ENCODE measurements at regions of chr5 and their contacts with region 1.

Region 1: GRCh38 chr5:41856644-41857491 is 13.4 kb downstream of the OXCT1 start:
- DNase-seq: peak in 13 of 14 experiments; percentile 6 to 87 (median 40)
- ATAC-seq: peak; percentile 92
- H3K4me3 ChIP-seq: no peak overlapping the region
- H3K4me3 Mint-ChIP-seq: no peak overlapping the region
- H3K27ac ChIP-seq: no peak overlapping the region
- H3K27ac Mint-ChIP-seq: no peak overlapping the region
- H3K4me1 ChIP-seq: peaks cover 3% of the 10 kb centered on the region
- H3K4me1 Mint-ChIP-seq: peaks cover 9% of the 10 kb centered on the region
- H3K27me3 ChIP-seq: no peaks in the 10 kb centered on the region
- H3K27me3 Mint-ChIP-seq: no peaks in the 10 kb centered on the region
- CTCF ChIP-seq: peak; percentile 83

Region 2: DNA sequence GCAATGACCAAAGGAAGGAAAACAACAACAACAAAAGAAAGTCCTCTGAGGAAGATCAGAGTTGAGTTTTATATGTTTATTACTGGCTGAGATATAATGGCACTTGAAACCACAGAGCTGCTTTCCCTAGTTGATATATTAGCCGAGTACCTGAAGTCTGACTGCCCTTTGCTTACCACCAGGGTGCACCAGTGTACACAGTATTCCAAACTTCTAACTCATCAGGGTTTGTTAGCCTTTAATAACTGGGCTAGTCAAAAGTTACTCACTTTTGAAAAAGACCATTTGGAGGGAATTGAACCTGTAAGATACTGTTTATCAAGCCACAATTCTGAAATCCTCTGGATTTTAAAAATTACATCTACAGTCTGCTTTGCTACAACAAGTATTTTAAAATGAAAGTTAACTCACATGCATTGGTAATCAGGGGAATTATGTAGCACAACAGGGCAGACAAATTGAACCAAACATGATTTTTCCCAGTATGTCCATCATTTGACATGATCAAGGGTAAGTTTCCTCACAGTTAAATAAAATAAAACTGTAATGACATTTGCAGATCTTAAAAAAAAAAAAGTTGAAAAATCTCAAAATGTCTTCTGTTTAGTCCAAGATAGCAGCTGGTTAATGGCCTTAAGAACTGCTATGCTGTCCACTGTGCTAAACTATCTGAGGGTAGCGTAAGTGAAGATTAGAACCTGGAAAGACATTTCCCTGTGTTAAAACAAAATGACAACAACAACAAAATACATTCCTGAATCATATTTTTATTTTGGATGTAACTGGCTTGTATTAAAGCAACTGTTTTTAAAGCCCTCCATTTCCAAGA is 586.2 kb before region 1 on chr5:
- CTCF ChIA-PET with region 1: no interaction called
- POLR2A ChIA-PET with region 1: no interaction called
- intact Hi-C with region 1: no loop called
- DNase-seq: peak in 3 of 14 experiments; percentile 1 to 9 (median 3)
- ATAC-seq: no peak
- H3K4me3 ChIP-seq: no peak overlapping the region
- H3K4me3 Mint-ChIP-seq: no peak overlapping the region
- H3K27ac ChIP-seq: no peak overlapping the region
- H3K27ac Mint-ChIP-seq: no peak overlapping the region
- H3K4me1 ChIP-seq: no peaks in the 10 kb centered on the region
- H3K4me1 Mint-ChIP-seq: no peaks in the 10 kb centered on the region
- H3K27me3 ChIP-seq: no peaks in the 10 kb centered on the region
- H3K27me3 Mint-ChIP-seq: no peaks in the 10 kb centered on the region
- CTCF ChIP-seq: no peak

Region 3: GRCh38 chr5:41843456-41844370 is 13.2 kb before region 1 on chr5:
- CTCF ChIA-PET with region 1: interaction called, 10 read pairs
- POLR2A ChIA-PET with region 1: interaction called, 3 read pairs
- intact Hi-C with region 1: no loop called
- DNase-seq: peak in 4 of 14 experiments; percentile 33 to 62 (median 58)
- ATAC-seq: peak; percentile 67
- H3K4me3 ChIP-seq: no peak overlapping the region
- H3K4me3 Mint-ChIP-seq: no peak overlapping the region
- H3K27ac ChIP-seq: no peak overlapping the region
- H3K27ac Mint-ChIP-seq: no peak overlapping the region
- H3K4me1 ChIP-seq: no peaks in the 10 kb centered on the region
- H3K4me1 Mint-ChIP-seq: peaks cover 9% of the 10 kb centered on the region
- H3K27me3 ChIP-seq: no peaks in the 10 kb centered on the region
- H3K27me3 Mint-ChIP-seq: no peaks in the 10 kb centered on the region
- CTCF ChIP-seq: peak; percentile 70

Region 4: GRCh38 chr5:41924872-41925554 is 68.1 kb after region 1 on chr5 and contains the start of gene FBXO4:
- CTCF ChIA-PET with region 1: interaction called, 18 read pairs
- POLR2A ChIA-PET with region 1: interaction called, 10 read pairs
- intact Hi-C with region 1: loop called (anchors 2 kb)
- DNase-seq: peak; percentile 76 to 96 (median 86)
- ATAC-seq: peak; percentile 95
- H3K4me3 ChIP-seq: peak within 1 kb of the TSS; percentile 81
- H3K4me3 Mint-ChIP-seq: peak within 1 kb of the TSS; percentile 87
- H3K27ac ChIP-seq: peak within 1 kb of the TSS; percentile 93 to 95
- H3K27ac Mint-ChIP-seq: peak within 1 kb of the TSS; percentile 93
- H3K4me1 ChIP-seq: peaks cover 20% of the 10 kb centered on the region
- H3K4me1 Mint-ChIP-seq: peaks cover 29% of the 10 kb centered on the region
- H3K27me3 ChIP-seq: no peaks in the 10 kb centered on the region
- H3K27me3 Mint-ChIP-seq: no peaks in the 10 kb centered on the region
- CTCF ChIP-seq: peak; percentile 71
- total RNA-seq, gene FBXO4: 7.0 to 8.1 TPM

Region 5: GRCh38 chr5:42057254-42057690 is 200.4 kb after region 1 on chr5:
- CTCF ChIA-PET with region 1: interaction called, 48 read pairs
- POLR2A ChIA-PET with region 1: interaction called, 17 read pairs
- intact Hi-C with region 1: loop called (anchors 1 kb)
- DNase-seq: peak; percentile 27 to 74 (median 44)
- ATAC-seq: peak; percentile 84
- H3K4me3 ChIP-seq: no peak overlapping the region
- H3K4me3 Mint-ChIP-seq: no peak overlapping the region
- H3K27ac ChIP-seq: no peak overlapping the region
- H3K27ac Mint-ChIP-seq: no peak overlapping the region
- H3K4me1 ChIP-seq: no peaks in the 10 kb centered on the region
- H3K4me1 Mint-ChIP-seq: no peaks in the 10 kb centered on the region
- H3K27me3 ChIP-seq: no peaks in the 10 kb centered on the region
- H3K27me3 Mint-ChIP-seq: peaks cover 10% of the 10 kb centered on the region
- CTCF ChIP-seq: peak; percentile 78

Region 6: DNA sequence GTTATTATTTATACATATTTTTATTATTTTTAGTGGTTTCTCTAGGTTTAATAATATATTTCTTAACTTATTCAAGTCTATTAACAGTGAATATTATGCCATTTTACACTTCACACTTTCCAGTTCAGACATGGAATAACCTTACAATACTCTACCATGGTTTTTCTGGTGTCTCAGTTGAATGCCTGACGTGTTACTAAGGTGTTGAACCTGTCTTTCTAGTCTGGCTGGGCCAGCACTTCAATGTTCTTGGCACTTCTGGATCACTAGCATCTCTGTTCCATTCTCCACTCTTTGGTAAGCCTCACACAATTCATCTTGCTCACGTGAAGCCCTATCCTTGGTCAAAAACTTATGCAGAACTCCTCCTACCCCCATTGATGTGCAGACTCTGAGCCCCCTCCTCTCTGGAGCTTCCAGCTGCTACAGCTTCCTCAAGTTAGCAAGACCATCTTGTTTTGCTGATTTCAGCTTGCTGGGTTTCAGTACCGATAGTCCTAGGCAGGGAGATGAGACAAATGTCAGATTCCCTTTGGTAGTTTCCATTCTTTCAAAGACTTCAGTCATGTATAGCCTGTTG is 311.3 kb after region 1 on chr5:
- CTCF ChIA-PET with region 1: no interaction called
- POLR2A ChIA-PET with region 1: no interaction called
- intact Hi-C with region 1: no loop called
- DNase-seq: no peak
- ATAC-seq: no peak
- H3K4me3 ChIP-seq: no peak overlapping the region
- H3K4me3 Mint-ChIP-seq: no peak overlapping the region
- H3K27ac ChIP-seq: no peak overlapping the region
- H3K27ac Mint-ChIP-seq: no peak overlapping the region
- H3K4me1 ChIP-seq: no peaks in the 10 kb centered on the region
- H3K4me1 Mint-ChIP-seq: no peaks in the 10 kb centered on the region
- H3K27me3 ChIP-seq: no peaks in the 10 kb centered on the region
- H3K27me3 Mint-ChIP-seq: no peaks in the 10 kb centered on the region
- CTCF ChIP-seq: no peak

Region 7: GRCh38 chr5:42583322-42583721 is 726.5 kb after region 1 on chr5:
- CTCF ChIA-PET with region 1: no interaction called
- POLR2A ChIA-PET with region 1: interaction called, 3 read pairs
- intact Hi-C with region 1: loop called (anchors 5 kb)
- DNase-seq: peak in 5 of 14 experiments; percentile 15 to 54 (median 43)
- ATAC-seq: no peak
- H3K4me3 ChIP-seq: no peak overlapping the region
- H3K4me3 Mint-ChIP-seq: no peak overlapping the region
- H3K27ac ChIP-seq: no peak overlapping the region
- H3K27ac Mint-ChIP-seq: no peak overlapping the region
- H3K4me1 ChIP-seq: no peaks in the 10 kb centered on the region
- H3K4me1 Mint-ChIP-seq: no peaks in the 10 kb centered on the region
- H3K27me3 ChIP-seq: peaks cover 0 to 8% of the 10 kb centered on the region in 2 experiments
- H3K27me3 Mint-ChIP-seq: peaks cover 40% of the 10 kb centered on the region
- CTCF ChIP-seq: peak; percentile 68

Region 8: DNA sequence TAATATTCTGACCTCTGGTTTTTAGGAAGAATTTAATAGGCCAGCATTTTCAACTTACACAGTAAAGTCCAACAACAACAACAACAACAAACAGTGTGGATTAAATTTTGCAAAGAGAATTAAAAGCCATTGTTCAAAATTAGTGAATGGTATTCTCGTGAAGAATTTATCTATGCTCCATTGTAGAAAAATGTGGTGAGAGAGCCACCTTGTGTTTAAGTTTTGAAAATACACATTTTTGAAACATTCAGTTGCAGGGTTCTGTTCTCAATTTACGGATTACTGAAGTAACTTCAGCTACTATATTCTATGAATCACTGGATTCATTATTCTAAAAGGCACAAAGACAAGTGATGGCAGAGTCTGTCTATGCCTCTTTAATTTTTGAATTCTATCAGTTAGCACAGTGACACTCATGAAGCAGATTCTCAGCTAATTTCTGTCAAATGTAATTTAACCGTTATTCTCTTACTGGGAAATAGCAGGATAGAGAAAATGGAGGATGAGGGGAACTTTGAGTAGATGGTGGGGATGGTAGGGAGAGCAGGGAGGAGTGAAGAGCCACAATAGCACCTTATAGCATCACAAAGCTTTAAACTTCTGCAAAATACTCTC is 910.7 kb after region 1 on chr5:
- CTCF ChIA-PET with region 1: interaction called, 3 read pairs
- POLR2A ChIA-PET with region 1: no interaction called
- intact Hi-C with region 1: loop called (anchors 1 to 5 kb)
- DNase-seq: peak in 3 of 14 experiments; percentile 38 to 49 (median 44)
- ATAC-seq: no peak
- H3K4me3 ChIP-seq: no peak overlapping the region
- H3K4me3 Mint-ChIP-seq: no peak overlapping the region
- H3K27ac ChIP-seq: no peak overlapping the region
- H3K27ac Mint-ChIP-seq: no peak overlapping the region
- H3K4me1 ChIP-seq: no peaks in the 10 kb centered on the region
- H3K4me1 Mint-ChIP-seq: no peaks in the 10 kb centered on the region
- H3K27me3 ChIP-seq: no peaks in the 10 kb centered on the region
- H3K27me3 Mint-ChIP-seq: peaks cover 5% of the 10 kb centered on the region
- CTCF ChIP-seq: peak; percentile 70

Region 9: GRCh38 chr5:42889311-42889933 is 1032.6 kb after region 1 on chr5:
- CTCF ChIA-PET with region 1: no interaction called
- POLR2A ChIA-PET with region 1: no interaction called
- intact Hi-C with region 1: loop called (anchors 5 kb)
- DNase-seq: peak; percentile 36 to 79 (median 54)
- ATAC-seq: peak; percentile 90
- H3K4me3 ChIP-seq: no peak overlapping the region
- H3K4me3 Mint-ChIP-seq: no peak overlapping the region
- H3K27ac ChIP-seq: no peak overlapping the region
- H3K27ac Mint-ChIP-seq: no peak overlapping the region
- H3K4me1 ChIP-seq: no peaks in the 10 kb centered on the region
- H3K4me1 Mint-ChIP-seq: no peaks in the 10 kb centered on the region
- H3K27me3 ChIP-seq: no peaks in the 10 kb centered on the region
- H3K27me3 Mint-ChIP-seq: peaks cover 9% of the 10 kb centered on the region
- CTCF ChIP-seq: peak; percentile 90

Measured in CD4-positive, alpha-beta T cell (primary cell).